Calu3 (cell line): ENCODE measurements at regions of chr10 and their contacts with region 1.

Region 1: GRCh38 chr10:66941491-66941890 is 15.7 kb downstream of the LRRTM3 start:
- DNase-seq: no peak
- H3K4me3 Mint-ChIP-seq: no peak overlapping the region
- H3K27ac Mint-ChIP-seq: no peak overlapping the region
- H3K4me1 Mint-ChIP-seq: no peaks in the 10 kb centered on the region
- H3K27me3 Mint-ChIP-seq: peaks cover 55% of the 10 kb centered on the region
- CTCF ChIP-seq: no peak

Region 2: GRCh38 chr10:67306588-67307205 is 365.2 kb after region 1 on chr10:
- CTCF ChIA-PET with region 1: no interaction called
- intact Hi-C with region 1: loop called (anchors 10 kb)
- DNase-seq: peak; percentile 5
- H3K4me3 Mint-ChIP-seq: no peak overlapping the region
- H3K27ac Mint-ChIP-seq: no peak overlapping the region
- H3K4me1 Mint-ChIP-seq: no peaks in the 10 kb centered on the region
- H3K27me3 Mint-ChIP-seq: peaks cover 13% of the 10 kb centered on the region
- CTCF ChIP-seq: peak; percentile 75